ENCODE measurements at regions of chr6 and their contacts with region 1.

Region 1: DNA sequence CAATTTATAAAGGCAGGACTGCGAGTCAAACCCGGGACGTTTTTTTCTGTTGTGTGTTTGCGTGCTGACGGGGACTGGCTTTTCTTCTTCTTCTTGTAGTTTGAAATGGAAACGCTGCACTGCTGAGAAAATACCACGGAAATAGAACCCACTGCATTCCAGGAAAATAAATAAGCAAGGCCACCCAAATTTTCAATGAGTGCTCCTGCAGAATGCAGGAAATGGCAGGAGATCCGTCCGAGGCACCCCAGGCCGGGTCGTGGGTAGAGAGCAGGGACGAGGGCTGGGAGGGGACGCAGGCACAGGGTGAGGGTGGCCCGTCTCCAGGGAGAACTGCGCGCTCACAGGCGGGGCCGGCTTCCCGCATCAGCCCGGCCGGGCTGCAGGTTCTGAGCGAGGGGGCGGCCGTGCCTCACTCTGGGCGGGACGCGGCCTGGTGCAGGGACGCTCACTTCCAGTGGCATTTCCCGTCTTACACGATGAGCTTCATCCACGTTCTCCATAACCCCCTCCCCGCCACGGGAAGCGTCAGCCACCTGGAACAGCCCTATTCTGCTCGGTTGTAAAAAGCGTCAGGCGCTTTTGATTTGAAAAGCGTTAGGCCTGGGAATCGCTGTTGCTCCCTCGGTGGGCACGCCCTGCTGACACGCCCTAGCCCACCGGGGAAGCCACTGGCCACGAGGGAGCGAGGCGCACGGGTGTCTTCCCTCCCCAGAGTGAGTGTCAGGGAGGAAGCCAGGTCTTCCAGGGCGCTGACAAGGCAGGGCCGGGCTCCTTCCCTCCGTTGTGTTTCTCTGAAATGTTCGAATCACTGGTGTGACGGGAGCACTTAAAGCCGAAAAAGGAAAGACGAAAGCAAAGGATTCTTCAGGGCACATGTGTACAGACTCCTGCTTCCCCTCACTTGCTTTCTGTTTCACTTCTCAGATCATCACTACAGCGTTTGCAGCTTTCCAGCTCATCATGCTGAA is 17.9 kb upstream of the EXOC2 start:
- DNase-seq: peak; percentile 75
- ATAC-seq: peak; percentile 87
- H3K4me3 ChIP-seq: peak overlapping the region; percentile 46 to 95 (median 91)
- H3K4me3 Mint-ChIP-seq: peak overlapping the region; percentile 99
- H3K27ac ChIP-seq: peak overlapping the region; percentile 87
- H3K27ac Mint-ChIP-seq: peak overlapping the region; percentile 98
- H3K4me1 ChIP-seq: peaks cover 12 to 14% of the 10 kb centered on the region in 2 donors
- H3K4me1 Mint-ChIP-seq: peaks cover 15% of the 10 kb centered on the region
- H3K27me3 ChIP-seq: no peaks in the 10 kb centered on the region
- H3K27me3 Mint-ChIP-seq: peaks cover 5% of the 10 kb centered on the region
- CTCF ChIP-seq: no peak

Region 2: DNA sequence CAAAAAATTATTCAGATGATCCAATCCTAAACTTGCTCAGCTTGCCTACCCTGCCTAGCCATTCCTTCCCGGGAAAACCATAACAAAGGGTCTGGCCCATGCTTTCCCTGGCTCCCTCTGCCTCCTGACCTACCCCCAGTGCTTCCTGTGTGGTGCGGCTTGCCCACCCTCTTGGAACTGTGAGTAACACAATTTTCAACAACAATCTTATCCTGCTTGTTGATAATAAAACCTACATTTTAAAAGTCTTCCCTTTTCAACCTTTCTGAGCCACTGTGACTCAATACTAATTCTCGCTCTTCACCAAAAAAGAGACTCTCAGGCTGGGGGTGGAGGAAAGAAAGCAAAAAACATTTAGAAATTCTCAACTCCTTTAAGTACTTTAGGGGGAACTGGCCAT is 35.9 kb before region 1 on chr6:
- CTCF ChIA-PET with region 1: no interaction called
- POLR2A ChIA-PET with region 1: no interaction called
- intact Hi-C with region 1: no loop called
- DNase-seq: no peak
- ATAC-seq: no peak
- H3K4me3 ChIP-seq: no peak overlapping the region
- H3K4me3 Mint-ChIP-seq: no peak overlapping the region
- H3K27ac ChIP-seq: no peak overlapping the region
- H3K27ac Mint-ChIP-seq: no peak overlapping the region
- H3K4me1 ChIP-seq: no peaks in the 10 kb centered on the region
- H3K4me1 Mint-ChIP-seq: peaks cover 17% of the 10 kb centered on the region
- H3K27me3 ChIP-seq: no peaks in the 10 kb centered on the region
- H3K27me3 Mint-ChIP-seq: no peaks in the 10 kb centered on the region
- CTCF ChIP-seq: no peak

Region 3: DNA sequence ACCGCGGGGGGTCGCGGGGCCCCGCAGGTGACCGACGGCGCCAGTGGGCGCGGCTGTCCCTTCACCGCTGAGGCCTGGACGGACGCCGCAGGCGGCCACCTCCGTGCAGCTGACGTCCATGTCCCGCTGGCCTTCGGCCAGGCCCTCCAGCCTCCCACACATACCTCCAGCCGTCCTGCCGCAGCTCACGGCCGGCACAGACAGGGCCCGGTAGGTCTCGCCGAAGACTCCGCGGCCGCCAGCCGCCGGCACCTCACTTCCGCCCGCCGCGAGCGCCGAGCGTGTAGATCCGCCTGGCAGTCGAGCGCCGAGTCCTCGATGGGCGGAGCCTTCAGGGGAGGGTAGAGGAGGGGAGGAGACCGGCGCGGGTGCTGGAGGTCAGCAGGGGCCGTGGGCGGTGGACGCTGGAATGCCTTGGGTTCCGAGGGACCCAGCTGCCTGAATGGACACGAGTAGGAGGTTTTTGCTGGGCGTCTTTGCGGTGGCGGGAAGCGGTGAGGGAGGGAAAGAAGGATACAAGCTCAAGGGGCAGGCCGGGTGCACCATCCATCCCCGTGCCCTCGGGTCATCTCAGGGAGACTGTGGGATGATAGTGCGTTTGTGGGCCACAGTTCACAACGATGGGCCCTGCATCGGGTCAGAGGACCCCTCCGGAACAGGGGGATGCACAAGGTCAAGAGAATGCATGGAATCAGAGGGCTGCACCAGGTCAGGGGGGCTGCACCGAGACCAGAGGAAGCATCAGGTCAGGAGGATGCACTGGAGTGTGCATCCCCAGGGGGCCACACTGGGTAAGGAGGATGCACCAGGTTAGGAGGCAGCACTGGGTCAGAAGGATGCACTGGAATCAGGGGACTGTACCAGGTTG is 17.8 kb before region 1 on chr6 and contains the start of gene EXOC2:
- CTCF ChIA-PET with region 1: interaction called, 3 read pairs
- POLR2A ChIA-PET with region 1: interaction called, 7 read pairs
- intact Hi-C with region 1: loop called (anchors 1 kb)
- DNase-seq: peak; percentile 87
- ATAC-seq: peak; percentile 86
- H3K4me3 ChIP-seq: peak within 1 kb of the TSS; percentile 45 to 91 (median 86)
- H3K4me3 Mint-ChIP-seq: peak within 1 kb of the TSS; percentile 99
- H3K27ac ChIP-seq: peak within 1 kb of the TSS; percentile 62 to 93
- H3K27ac Mint-ChIP-seq: peak within 1 kb of the TSS; percentile 95
- H3K4me1 ChIP-seq: peaks cover 16 to 17% of the 10 kb centered on the region in 2 donors
- H3K4me1 Mint-ChIP-seq: peaks cover 35% of the 10 kb centered on the region
- H3K27me3 ChIP-seq: no peaks in the 10 kb centered on the region
- H3K27me3 Mint-ChIP-seq: no peaks in the 10 kb centered on the region
- CTCF ChIP-seq: no peak
- total RNA-seq, gene EXOC2: 41.0 and 45.0 TPM in 2 replicates